Endothelial cell of umbilical vein (primary cell): ENCODE measurements at regions of chr2 and their contacts with region 1.

Region 1: DNA sequence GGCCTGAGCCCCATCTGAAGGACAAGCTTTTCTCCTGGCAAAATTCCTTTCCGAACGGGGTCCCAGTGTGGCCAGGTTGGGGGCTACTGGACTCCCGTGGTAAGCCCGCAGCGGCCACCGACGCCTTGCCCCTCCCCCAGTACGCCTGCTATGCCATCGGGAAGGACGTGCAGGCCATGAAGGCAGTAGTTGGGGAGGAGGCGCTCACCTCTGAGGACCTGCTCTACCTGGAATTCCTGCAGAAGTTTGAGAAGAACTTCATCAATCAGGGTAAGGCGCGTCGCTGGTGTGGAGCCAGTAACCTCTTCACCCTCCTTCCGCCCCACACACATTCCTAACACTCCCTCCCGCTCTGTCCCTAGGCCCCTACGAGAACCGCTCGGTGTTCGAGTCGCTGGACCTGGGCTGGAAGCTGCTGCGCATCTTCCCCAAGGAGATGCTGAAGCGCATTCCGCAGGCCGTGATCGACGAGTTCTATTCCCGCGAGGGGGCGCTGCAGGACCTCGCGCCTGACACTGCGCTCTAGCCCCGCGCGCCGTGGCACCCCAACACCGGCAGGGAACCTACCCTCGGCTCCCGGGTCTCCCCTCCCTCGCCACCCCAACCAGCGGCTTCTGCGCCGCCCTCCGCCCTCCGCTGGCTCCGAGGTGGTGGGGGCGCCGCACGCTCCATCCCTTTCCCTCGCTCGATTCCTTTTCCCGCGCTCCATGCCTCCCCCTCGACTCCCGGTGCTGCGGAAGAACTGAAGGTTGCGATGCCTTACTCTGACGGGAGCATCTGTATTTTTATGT is 13.6 kb upstream of the ANKRD53 start:
- DNase-seq: peak; percentile 56
- H3K4me3 ChIP-seq: peak overlapping the region; percentile 19 to 37 (median 24)
- H3K27ac ChIP-seq: no peak overlapping the region
- H3K4me1 ChIP-seq: peaks cover 2% of the 10 kb centered on the region
- H3K27me3 ChIP-seq: peaks cover 20 to 30% of the 10 kb centered on the region in 2 experiments
- CTCF ChIP-seq: peak; percentile 88 to 90
- POLR2A ChIP-seq: no peak

Region 2: DNA sequence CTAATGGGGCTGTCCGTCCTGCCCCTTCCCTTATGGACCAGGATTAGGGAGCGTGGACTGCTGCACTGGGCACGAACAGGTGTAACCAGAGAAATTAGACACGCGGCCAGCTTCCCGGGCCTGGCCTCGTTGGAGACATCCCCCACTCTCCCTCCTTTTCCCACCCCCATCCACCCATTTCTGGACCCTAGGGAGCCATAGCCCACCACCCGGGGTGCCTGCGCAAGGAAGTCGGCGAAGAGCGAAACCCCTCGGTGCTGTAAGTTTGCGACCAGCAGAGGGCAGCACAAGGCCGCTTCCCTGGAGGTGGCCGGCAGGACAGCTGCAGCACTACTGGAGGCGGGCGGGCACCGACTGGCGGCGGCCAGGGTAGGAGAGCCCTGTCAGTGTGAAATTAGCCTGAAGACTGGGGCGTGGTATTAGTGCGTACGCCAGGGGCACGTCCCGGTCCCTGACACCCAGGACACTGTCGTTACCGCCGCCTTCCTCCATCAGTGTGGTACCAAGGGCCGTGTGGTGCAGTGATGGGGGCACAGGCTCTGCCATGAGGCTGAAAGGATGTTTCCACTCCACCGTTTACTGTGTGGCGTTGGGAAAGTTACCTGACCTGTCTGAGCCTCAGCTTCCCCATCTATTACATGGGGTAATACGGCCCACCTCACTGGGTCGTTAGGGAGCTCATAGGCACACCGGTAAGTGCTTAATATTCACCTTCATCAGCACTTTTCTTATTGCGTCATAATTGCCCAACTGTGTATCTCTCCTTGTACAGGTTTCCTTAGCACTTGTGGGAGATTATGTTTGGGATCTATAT is 93.2 kb before region 1 on chr2:
- CTCF ChIA-PET with region 1: interaction called, 12 read pairs
- POLR2A ChIA-PET with region 1: no interaction called
- dilution Hi-C with region 1: no loop called
- intact Hi-C with region 1: no loop called
- DNase-seq: peak; percentile 77
- H3K4me3 ChIP-seq: no peak overlapping the region
- H3K27ac ChIP-seq: no peak overlapping the region
- H3K4me1 ChIP-seq: peaks cover 2% of the 10 kb centered on the region
- H3K27me3 ChIP-seq: peaks cover 15 to 27% of the 10 kb centered on the region in 2 experiments
- CTCF ChIP-seq: peak; percentile 95
- POLR2A ChIP-seq: no peak

Region 3: GRCh38 chr2:70977605-70978205 is 12.9 kb after region 1 on chr2:
- CTCF ChIA-PET with region 1: interaction called, 52 read pairs
- POLR2A ChIA-PET with region 1: no interaction called
- dilution Hi-C with region 1: no loop called
- intact Hi-C with region 1: loop called (anchors 1 kb)
- DNase-seq: peak; percentile 35
- H3K4me3 ChIP-seq: peak overlapping the region in 1 of 3 experiments; percentile 56
- H3K27ac ChIP-seq: peak overlapping the region; percentile 85
- H3K4me1 ChIP-seq: peaks cover 13% of the 10 kb centered on the region
- H3K27me3 ChIP-seq: peaks cover 5 to 6% of the 10 kb centered on the region in 2 experiments
- CTCF ChIP-seq: no peak
- POLR2A ChIP-seq: no peak

Region 4: DNA sequence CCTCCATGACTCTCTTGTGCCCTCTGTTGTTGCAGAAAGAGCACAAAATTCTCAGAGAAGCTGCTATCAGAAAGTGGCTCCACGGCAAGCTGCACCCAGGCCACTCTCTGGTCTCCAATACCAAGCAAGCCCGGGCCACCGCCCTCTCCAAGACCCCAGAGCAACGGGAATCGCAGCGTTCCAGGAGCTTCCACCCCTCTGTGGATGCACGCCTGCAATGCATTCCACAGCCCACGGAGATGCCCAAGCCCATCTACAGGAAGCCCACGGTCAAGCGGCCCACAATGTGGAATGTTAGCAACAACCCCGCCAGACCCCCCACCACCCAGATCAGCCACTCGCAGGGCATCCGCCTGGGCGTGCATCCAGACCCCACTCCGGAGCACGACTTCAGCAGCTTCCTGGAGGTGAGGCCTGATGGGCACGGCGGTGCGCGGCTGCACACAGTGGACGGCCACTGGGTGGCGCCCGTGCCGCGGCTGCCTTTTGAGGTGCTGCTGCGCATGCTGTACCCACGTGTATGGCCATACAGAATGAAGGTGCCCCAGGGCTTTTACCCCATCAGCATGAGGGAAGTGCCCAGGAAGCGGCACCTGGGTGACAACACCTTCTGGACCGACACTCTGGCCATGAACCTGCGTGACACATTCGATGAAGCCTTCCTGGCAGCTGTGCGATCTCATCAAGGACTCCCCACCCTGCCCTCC is 19.9 kb after region 1 on chr2:
- CTCF ChIA-PET with region 1: interaction called, 52 read pairs
- POLR2A ChIA-PET with region 1: no interaction called
- dilution Hi-C with region 1: no loop called
- intact Hi-C with region 1: no loop called
- DNase-seq: peak; percentile 58
- H3K4me3 ChIP-seq: no peak overlapping the region
- H3K27ac ChIP-seq: no peak overlapping the region
- H3K4me1 ChIP-seq: no peaks in the 10 kb centered on the region
- H3K27me3 ChIP-seq: no peaks in the 10 kb centered on the region
- CTCF ChIP-seq: peak; percentile 94 to 96
- POLR2A ChIP-seq: no peak

Region 5: DNA sequence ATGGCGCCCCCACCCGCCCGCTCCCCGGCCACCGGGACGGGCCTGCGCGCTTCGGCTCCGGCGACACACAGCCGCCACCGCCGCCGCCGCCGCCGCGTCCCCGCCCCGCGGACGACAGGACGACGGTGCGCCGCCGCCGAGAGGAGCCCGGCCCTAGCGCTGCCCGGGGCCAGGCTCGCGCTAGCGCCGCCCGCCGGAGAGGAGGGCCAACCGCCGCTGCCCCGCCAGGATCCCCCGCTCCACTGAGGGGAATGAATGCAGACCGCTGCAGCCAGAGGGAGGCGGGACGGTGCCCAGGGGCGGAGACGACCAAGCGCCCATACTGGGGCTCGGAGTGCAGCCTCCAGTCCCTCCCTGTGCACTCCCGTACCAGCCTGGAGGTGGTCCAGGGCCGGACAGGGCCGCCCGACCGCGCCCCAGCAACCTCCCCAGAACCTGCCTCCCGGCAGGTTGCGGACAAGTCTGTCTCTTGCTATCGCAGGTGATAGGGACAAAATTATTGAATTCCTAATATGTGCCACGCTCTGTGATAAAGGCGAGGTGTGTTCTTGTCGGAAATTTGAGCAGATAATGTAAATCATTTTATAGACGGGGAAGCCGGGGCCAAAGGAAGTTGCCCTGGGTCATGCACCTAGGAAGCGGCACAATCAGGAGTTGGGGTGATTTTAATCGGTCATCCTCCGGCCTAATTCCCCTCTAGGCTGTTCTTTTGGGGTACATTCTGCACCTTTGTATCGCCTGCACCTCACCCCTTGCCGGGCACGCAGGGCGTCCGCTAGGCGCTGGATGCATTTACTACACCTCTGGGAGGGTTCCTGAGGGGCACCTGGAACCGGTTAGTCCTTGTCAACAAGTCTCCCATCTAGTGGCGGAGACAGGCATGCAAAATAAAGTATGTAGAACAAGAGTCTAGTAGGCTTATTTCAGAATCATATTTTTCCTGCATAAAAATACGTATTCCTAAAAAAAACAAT is 30.3 kb after region 1 on chr2 and contains the start of gene TEX261:
- CTCF ChIA-PET with region 1: interaction called, 3 read pairs
- POLR2A ChIA-PET with region 1: no interaction called
- dilution Hi-C with region 1: no loop called
- intact Hi-C with region 1: loop called (anchors 2 kb)
- DNase-seq: peak; percentile 92
- H3K4me3 ChIP-seq: peak within 1 kb of the TSS; percentile 73 to 97 (median 75)
- H3K27ac ChIP-seq: peak within 1 kb of the TSS; percentile 32
- H3K4me1 ChIP-seq: peaks cover 20% of the 10 kb centered on the region
- H3K27me3 ChIP-seq: no peaks in the 10 kb centered on the region
- CTCF ChIP-seq: peak; percentile 81 to 82
- POLR2A ChIP-seq: peak; percentile 66
- total RNA-seq, gene TEX261: 63.3 and 71.2 TPM in 2 replicates

Region 6: GRCh38 chr2:71000780-71001591 is 36.2 kb after region 1 on chr2:
- CTCF ChIA-PET with region 1: interaction called, 65 read pairs
- POLR2A ChIA-PET with region 1: no interaction called
- dilution Hi-C with region 1: no loop called
- intact Hi-C with region 1: loop called (anchors 1 kb)
- DNase-seq: peak; percentile 43
- H3K4me3 ChIP-seq: no peak overlapping the region
- H3K27ac ChIP-seq: no peak overlapping the region
- H3K4me1 ChIP-seq: no peaks in the 10 kb centered on the region
- H3K27me3 ChIP-seq: peaks cover 4 to 5% of the 10 kb centered on the region in 2 experiments
- CTCF ChIP-seq: peak; percentile 95 to 97
- POLR2A ChIP-seq: no peak

Region 7: GRCh38 chr2:71018625-71019024 is 53.8 kb after region 1 on chr2:
- CTCF ChIA-PET with region 1: no interaction called
- POLR2A ChIA-PET with region 1: no interaction called
- dilution Hi-C with region 1: no loop called
- intact Hi-C with region 1: no loop called
- DNase-seq: no peak
- H3K4me3 ChIP-seq: no peak overlapping the region
- H3K27ac ChIP-seq: no peak overlapping the region
- H3K4me1 ChIP-seq: no peaks in the 10 kb centered on the region
- H3K27me3 ChIP-seq: no peaks in the 10 kb centered on the region
- CTCF ChIP-seq: no peak
- POLR2A ChIP-seq: no peak

Region 8: DNA sequence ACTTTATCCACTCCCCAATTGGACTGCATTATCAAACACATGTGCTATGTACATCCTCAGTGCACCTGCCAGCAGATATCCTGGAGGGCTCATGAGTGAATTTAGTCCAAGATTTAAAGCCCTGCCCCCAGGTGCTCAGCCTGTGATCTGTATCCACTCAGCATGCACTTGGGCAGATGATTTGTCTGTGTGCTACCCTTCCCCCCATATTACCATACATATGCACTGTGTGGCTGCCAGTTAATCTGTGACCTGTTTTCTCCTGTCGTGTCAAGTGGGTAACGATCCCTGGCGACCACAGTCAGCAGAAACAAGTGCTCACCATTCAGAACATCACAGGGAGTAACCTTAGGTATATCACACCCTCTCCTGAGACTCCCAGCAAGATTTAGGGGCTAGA is 113.8 kb after region 1 on chr2:
- CTCF ChIA-PET with region 1: no interaction called
- POLR2A ChIA-PET with region 1: no interaction called
- dilution Hi-C with region 1: no loop called
- intact Hi-C with region 1: no loop called
- DNase-seq: no peak
- H3K4me3 ChIP-seq: no peak overlapping the region
- H3K27ac ChIP-seq: no peak overlapping the region
- H3K4me1 ChIP-seq: no peaks in the 10 kb centered on the region
- H3K27me3 ChIP-seq: no peaks in the 10 kb centered on the region
- CTCF ChIP-seq: no peak
- POLR2A ChIP-seq: no peak